ENCODE measurements at regions of chr3 and their contacts with region 1.

Region 1: GRCh38 chr3:49454458-49454857 is 15.6 kb upstream of the DAG1 start:
- DNase-seq: no peak
- ATAC-seq: no peak
- H3K4me3 ChIP-seq: no peak overlapping the region
- H3K4me3 Mint-ChIP-seq: no peak overlapping the region
- H3K27ac ChIP-seq: no peak overlapping the region
- H3K27ac Mint-ChIP-seq: no peak overlapping the region
- H3K4me1 ChIP-seq: no peaks in the 10 kb centered on the region
- H3K4me1 Mint-ChIP-seq: no peaks in the 10 kb centered on the region
- H3K27me3 ChIP-seq: no peaks in the 10 kb centered on the region
- H3K27me3 Mint-ChIP-seq: no peaks in the 10 kb centered on the region
- CTCF ChIP-seq: no peak

Region 2: DNA sequence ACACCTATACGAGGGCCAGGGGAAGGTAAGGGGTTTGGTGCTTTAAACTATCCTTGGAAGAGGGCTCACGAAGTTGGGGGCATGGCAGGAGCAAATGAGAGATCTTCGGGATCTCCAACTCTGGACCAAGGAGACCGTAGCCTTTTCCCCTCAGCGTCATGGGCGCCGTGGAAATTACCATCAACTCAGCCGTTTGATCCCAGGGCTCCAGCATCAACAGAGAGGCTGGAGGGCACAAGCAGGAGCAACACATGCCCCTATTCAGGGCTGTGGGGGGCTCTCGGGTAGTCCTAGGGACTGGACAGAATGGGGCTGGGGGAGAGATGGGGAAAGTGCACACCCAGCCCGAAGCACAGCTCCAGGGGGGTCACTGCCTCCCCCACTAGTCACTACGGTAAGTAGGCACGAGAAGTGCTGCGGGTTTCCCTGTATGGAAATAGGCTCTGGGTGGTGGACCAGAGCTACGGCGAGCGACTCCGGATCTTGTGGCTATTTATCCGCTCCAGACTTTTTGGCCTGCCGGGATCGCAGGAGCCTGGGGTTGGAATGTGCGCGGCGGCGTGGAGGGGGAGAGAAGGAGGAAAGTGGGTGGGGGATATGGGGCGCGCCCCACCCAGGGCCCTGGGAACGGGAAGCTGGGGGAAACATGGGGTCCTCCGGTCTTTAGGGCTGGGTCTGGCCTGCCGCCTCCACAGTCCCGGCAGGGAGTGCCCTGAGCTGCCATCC is 321.1 kb before region 1 on chr3:
- CTCF ChIA-PET with region 1: no interaction called
- POLR2A ChIA-PET with region 1: no interaction called
- intact Hi-C with region 1: no loop called
- DNase-seq: no peak
- ATAC-seq: no peak
- H3K4me3 ChIP-seq: no peak overlapping the region
- H3K4me3 Mint-ChIP-seq: no peak overlapping the region
- H3K27ac ChIP-seq: no peak overlapping the region
- H3K27ac Mint-ChIP-seq: no peak overlapping the region
- H3K4me1 ChIP-seq: peaks cover 4% of the 10 kb centered on the region
- H3K4me1 Mint-ChIP-seq: no peaks in the 10 kb centered on the region
- H3K27me3 ChIP-seq: peaks cover 7 to 13% of the 10 kb centered on the region in 2 experiments
- H3K27me3 Mint-ChIP-seq: peaks cover 23% of the 10 kb centered on the region
- CTCF ChIP-seq: no peak

Region 3: GRCh38 chr3:49295489-49296058 is 158.9 kb before region 1 on chr3:
- CTCF ChIA-PET with region 1: interaction called, 9 read pairs
- POLR2A ChIA-PET with region 1: interaction called, 3 read pairs
- intact Hi-C with region 1: loop called in 1 of 2 experiments (anchors 1 kb)
- DNase-seq: peak in 5 of 9 experiments; percentile 22 to 65 (median 46)
- ATAC-seq: peak; percentile 77
- H3K4me3 ChIP-seq: no peak overlapping the region
- H3K4me3 Mint-ChIP-seq: no peak overlapping the region
- H3K27ac ChIP-seq: no peak overlapping the region
- H3K27ac Mint-ChIP-seq: peak overlapping the region; percentile 37
- H3K4me1 ChIP-seq: no peaks in the 10 kb centered on the region
- H3K4me1 Mint-ChIP-seq: peaks cover 5% of the 10 kb centered on the region
- H3K27me3 ChIP-seq: no peaks in the 10 kb centered on the region
- H3K27me3 Mint-ChIP-seq: no peaks in the 10 kb centered on the region
- CTCF ChIP-seq: peak; percentile 78

Region 4: DNA sequence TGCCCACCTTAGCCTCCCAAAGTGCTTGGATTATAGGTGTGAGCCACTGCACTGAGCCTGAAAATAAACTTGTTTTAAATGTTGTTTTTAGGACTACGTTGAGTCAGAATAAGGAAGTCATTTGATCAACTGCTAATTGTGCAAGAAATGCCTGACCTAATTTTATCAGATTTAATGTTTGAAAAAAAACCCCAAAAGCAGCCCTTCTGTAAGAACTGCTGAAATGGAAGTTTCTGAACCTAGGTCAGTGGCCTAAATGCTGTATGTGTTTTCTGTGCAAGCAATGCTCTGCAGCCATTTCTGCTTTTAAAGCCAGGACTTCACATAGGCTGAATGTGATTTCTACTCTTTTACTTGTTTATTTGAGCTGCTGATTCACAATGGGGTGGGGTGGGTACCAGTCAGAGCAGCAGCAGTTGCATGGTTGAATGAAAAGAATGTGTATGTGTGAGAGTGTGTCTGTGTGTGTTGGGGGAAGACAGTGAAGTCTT is 102.9 kb before region 1 on chr3:
- CTCF ChIA-PET with region 1: interaction called, 10 read pairs
- POLR2A ChIA-PET with region 1: no interaction called
- intact Hi-C with region 1: loop called (anchors 5 kb)
- DNase-seq: no peak
- ATAC-seq: no peak
- H3K4me3 ChIP-seq: no peak overlapping the region
- H3K4me3 Mint-ChIP-seq: no peak overlapping the region
- H3K27ac ChIP-seq: no peak overlapping the region
- H3K27ac Mint-ChIP-seq: peak overlapping the region; percentile 34
- H3K4me1 ChIP-seq: peaks cover 6% of the 10 kb centered on the region
- H3K4me1 Mint-ChIP-seq: peaks cover 20% of the 10 kb centered on the region
- H3K27me3 ChIP-seq: no peaks in the 10 kb centered on the region
- H3K27me3 Mint-ChIP-seq: no peaks in the 10 kb centered on the region
- CTCF ChIP-seq: no peak

Region 5: DNA sequence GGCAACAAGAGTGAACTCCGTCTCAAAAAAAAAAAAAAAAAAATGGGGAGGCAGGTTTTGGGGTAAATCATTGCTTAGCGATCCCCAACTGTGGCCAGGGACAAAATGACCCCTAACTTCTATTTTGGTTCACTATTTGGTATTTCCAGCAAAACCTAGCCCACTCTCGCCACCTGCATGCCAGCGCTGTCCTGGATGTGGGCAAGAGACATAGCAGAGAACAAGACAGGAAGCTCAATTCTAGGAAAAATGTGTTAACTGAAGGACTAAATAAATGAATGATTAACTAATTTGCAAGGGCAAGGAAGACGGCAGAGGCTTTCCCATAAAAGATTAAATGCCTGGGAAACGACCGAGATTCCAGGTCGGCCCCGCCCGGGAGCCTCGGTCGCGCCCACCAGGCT is 25.8 kb before region 1 on chr3:
- CTCF ChIA-PET with region 1: interaction called, 8 read pairs
- POLR2A ChIA-PET with region 1: interaction called, 5 read pairs
- intact Hi-C with region 1: loop called in 1 of 2 experiments (anchors 2 kb)
- DNase-seq: no peak
- ATAC-seq: peak; percentile 2
- H3K4me3 ChIP-seq: peak overlapping the region; percentile 63 to 85
- H3K4me3 Mint-ChIP-seq: peak overlapping the region; percentile 89
- H3K27ac ChIP-seq: peak overlapping the region; percentile 70 to 86
- H3K27ac Mint-ChIP-seq: peak overlapping the region; percentile 89
- H3K4me1 ChIP-seq: peaks cover 10% of the 10 kb centered on the region
- H3K4me1 Mint-ChIP-seq: peaks cover 14% of the 10 kb centered on the region
- H3K27me3 ChIP-seq: no peaks in the 10 kb centered on the region
- H3K27me3 Mint-ChIP-seq: no peaks in the 10 kb centered on the region
- CTCF ChIP-seq: no peak